ENCODE measurements at regions of chr18 and their contacts with region 1.

Region 1: GRCh38 chr18:13375302-13376255 is 157.0 kb downstream of the LDLRAD4 start:
- DNase-seq: peak; percentile 80
- H3K4me3 Mint-ChIP-seq: peak overlapping the region; percentile 74
- H3K27ac Mint-ChIP-seq: peak overlapping the region; percentile 95
- H3K4me1 Mint-ChIP-seq: peaks cover 78% of the 10 kb centered on the region
- H3K27me3 Mint-ChIP-seq: peaks cover 4% of the 10 kb centered on the region

Region 2: GRCh38 chr18:11851146-11851805 is 1524.3 kb before region 1 on chr18 and contains the start of gene CHMP1B:
- intact Hi-C with region 1: loop called (anchors 5 kb)
- DNase-seq: peak; percentile 95
- H3K4me3 Mint-ChIP-seq: peak within 1 kb of the TSS; percentile 99
- H3K27ac Mint-ChIP-seq: peak within 1 kb of the TSS; percentile 100
- H3K4me1 Mint-ChIP-seq: peaks cover 38% of the 10 kb centered on the region
- H3K27me3 Mint-ChIP-seq: peaks cover 6% of the 10 kb centered on the region
- total RNA-seq, gene CHMP1B: 24.8 and 26.8 TPM in 2 replicates

Region 3: GRCh38 chr18:12990967-12991838 is 384.4 kb before region 1 on chr18 and contains the start of gene CEP192:
- intact Hi-C with region 1: loop called (anchors 10 kb)
- DNase-seq: peak; percentile 98
- H3K4me3 Mint-ChIP-seq: peak within 1 kb of the TSS; percentile 93
- H3K27ac Mint-ChIP-seq: peak within 1 kb of the TSS; percentile 94
- H3K4me1 Mint-ChIP-seq: peaks cover 24% of the 10 kb centered on the region
- H3K27me3 Mint-ChIP-seq: peaks cover 1% of the 10 kb centered on the region
- total RNA-seq, gene CEP192: 31.2 and 32.0 TPM in 2 replicates

Region 4: GRCh38 chr18:13289481-13290205 is 85.9 kb before region 1 on chr18:
- intact Hi-C with region 1: loop called (anchors 1 kb)
- DNase-seq: no peak
- H3K4me3 Mint-ChIP-seq: no peak overlapping the region
- H3K27ac Mint-ChIP-seq: peak overlapping the region; percentile 67
- H3K4me1 Mint-ChIP-seq: peaks cover 66% of the 10 kb centered on the region
- H3K27me3 Mint-ChIP-seq: peaks cover 3% of the 10 kb centered on the region

Region 5: GRCh38 chr18:13401404-13401803 is 25.8 kb after region 1 on chr18:
- intact Hi-C with region 1: no loop called
- DNase-seq: no peak
- H3K4me3 Mint-ChIP-seq: no peak overlapping the region
- H3K27ac Mint-ChIP-seq: no peak overlapping the region
- H3K4me1 Mint-ChIP-seq: no peaks in the 10 kb centered on the region
- H3K27me3 Mint-ChIP-seq: peaks cover 1% of the 10 kb centered on the region

Region 6: DNA sequence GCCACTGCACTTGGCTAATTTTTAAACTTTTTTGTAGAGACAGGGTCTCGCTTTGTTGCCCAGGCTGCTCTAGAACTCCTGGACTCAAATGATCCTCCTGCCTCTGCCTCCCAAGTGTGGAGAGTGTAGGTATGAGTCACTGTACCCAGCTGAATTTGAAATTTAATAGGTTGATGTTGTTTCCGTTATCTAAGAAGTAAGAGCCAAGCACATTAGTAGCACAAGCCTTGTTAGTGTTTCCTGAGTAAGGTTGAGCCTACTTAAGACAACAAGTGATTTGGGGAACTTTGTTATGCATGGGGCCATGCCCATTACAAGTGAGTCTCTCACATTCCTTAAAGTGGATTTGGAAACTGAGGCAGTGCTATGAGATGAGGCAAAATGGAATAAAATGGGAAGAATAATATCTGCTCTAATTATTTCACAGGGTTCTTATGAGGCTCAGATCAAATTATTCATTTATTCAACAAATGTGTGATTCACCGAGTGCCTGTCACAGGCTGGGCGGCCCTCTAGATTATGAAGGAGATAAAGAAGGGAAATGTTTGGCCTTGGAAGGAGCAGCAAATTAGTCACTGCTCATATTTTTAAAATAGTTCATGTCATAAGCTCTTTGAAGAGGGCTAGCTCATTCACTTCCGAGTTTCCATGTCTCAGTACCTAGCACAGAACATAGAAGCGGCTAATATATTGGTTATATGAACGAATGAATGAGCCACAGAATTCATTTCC is 60.2 kb after region 1 on chr18:
- intact Hi-C with region 1: loop called (anchors 1 kb)
- DNase-seq: no peak
- H3K4me3 Mint-ChIP-seq: no peak overlapping the region
- H3K27ac Mint-ChIP-seq: no peak overlapping the region
- H3K4me1 Mint-ChIP-seq: peaks cover 68% of the 10 kb centered on the region
- H3K27me3 Mint-ChIP-seq: no peaks in the 10 kb centered on the region

Region 7: GRCh38 chr18:13566941-13567746 is 191.6 kb after region 1 on chr18:
- intact Hi-C with region 1: loop called (anchors 2 kb)
- DNase-seq: no peak
- H3K4me3 Mint-ChIP-seq: peak overlapping the region; percentile 61
- H3K27ac Mint-ChIP-seq: peak overlapping the region; percentile 87
- H3K4me1 Mint-ChIP-seq: peaks cover 72% of the 10 kb centered on the region
- H3K27me3 Mint-ChIP-seq: no peaks in the 10 kb centered on the region

Region 8: DNA sequence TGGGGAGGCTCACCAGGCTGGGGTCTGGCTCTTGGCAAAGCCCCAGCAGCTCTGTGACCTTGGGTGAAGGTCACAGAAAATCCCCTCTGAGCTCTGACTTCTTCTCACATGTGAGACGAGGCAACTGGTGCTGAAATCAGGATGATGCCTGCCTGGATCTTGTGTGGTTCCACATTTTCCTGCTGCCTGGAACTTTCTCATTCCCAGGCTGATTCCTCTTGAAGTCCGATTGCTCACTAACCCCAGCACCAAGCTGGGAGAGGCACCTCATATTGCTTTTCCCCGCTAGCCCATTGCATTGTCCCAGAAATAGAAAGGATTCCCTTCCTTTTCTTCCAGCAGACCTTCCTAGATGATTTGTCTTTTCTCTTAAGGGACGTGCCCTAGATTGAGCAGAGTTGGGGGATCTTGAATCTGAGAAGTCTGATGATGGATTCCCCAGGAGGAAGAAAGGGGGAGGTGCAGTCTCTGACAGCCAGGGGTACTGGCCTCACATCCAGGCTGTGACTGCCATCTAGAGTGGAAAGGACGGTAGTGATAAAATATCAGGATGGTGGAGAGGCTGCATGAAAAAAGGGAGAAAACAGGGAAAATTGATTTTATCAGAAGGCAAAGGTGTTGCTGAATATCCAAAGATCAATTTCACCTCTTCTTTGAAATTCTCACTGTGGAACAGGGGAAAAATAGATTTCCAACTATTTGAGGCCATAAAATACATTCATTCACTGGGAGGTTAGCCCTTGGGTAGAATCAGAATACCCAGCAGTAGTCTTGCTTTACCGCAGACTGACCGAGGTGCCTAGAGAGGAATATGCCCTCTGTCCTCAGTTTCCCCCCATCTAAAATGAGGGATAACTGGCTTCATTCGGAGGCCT is 254.5 kb after region 1 on chr18:
- intact Hi-C with region 1: loop called (anchors 5 kb)
- DNase-seq: no peak
- H3K4me3 Mint-ChIP-seq: no peak overlapping the region
- H3K27ac Mint-ChIP-seq: no peak overlapping the region
- H3K4me1 Mint-ChIP-seq: peaks cover 15% of the 10 kb centered on the region
- H3K27me3 Mint-ChIP-seq: no peaks in the 10 kb centered on the region